AG04449 (cell line): ENCODE measurements at regions of chr17 and their contacts with region 1.

Region 1: GRCh38 chr17:49315551-49316257 is 46.3 kb downstream of the ZNF652 start:
- DNase-seq: peak; percentile 69
- H3K4me3 ChIP-seq: no peak overlapping the region
- CTCF ChIP-seq: peak; percentile 63

Region 2: GRCh38 chr17:49117587-49118230 is 198.0 kb before region 1 on chr17:
- CTCF ChIA-PET with region 1: no interaction called
- POLR2A ChIA-PET with region 1: no interaction called
- DNase-seq: no peak
- H3K4me3 ChIP-seq: no peak overlapping the region
- CTCF ChIP-seq: no peak

Region 3: GRCh38 chr17:49216482-49216881 is 99.2 kb before region 1 on chr17:
- CTCF ChIA-PET with region 1: no interaction called
- POLR2A ChIA-PET with region 1: no interaction called
- DNase-seq: no peak
- H3K4me3 ChIP-seq: no peak overlapping the region
- CTCF ChIP-seq: no peak

Region 4: GRCh38 chr17:49327835-49328784 is 12.4 kb after region 1 on chr17:
- CTCF ChIA-PET with region 1: interaction called, 26 read pairs
- POLR2A ChIA-PET with region 1: no interaction called
- DNase-seq: no peak
- H3K4me3 ChIP-seq: no peak overlapping the region
- CTCF ChIP-seq: no peak

Region 5: DNA sequence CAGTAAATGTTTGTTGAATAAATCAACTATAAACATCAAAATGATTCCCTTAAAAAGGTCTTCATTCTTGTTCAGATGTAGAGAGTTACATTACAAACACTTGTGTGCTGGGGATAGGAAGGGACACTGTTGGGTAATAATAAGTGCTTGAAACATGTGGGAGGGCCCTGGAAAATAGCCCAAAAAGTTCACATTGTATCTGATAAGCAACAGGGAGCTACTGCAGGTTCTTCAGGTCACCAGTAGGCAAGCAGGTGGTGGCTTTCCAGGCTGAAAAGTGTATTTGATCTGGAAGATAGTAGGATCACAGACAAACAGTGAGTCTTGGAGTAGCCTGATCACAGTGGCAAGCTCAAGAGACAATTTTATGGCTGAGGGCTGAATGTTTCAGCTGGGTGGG is 65.4 kb after region 1 on chr17:
- CTCF ChIA-PET with region 1: interaction called, 11 read pairs
- POLR2A ChIA-PET with region 1: no interaction called
- DNase-seq: no peak
- H3K4me3 ChIP-seq: no peak overlapping the region
- CTCF ChIP-seq: no peak

Region 6: GRCh38 chr17:49390548-49391324 is 75.0 kb after region 1 on chr17:
- CTCF ChIA-PET with region 1: interaction called, 297 read pairs
- POLR2A ChIA-PET with region 1: no interaction called
- DNase-seq: no peak
- H3K4me3 ChIP-seq: no peak overlapping the region
- CTCF ChIP-seq: no peak

Region 7: GRCh38 chr17:49401971-49402611 is 86.4 kb after region 1 on chr17:
- CTCF ChIA-PET with region 1: interaction called, 297 read pairs
- POLR2A ChIA-PET with region 1: no interaction called
- DNase-seq: no peak
- H3K4me3 ChIP-seq: no peak overlapping the region
- CTCF ChIP-seq: no peak

Region 8: DNA sequence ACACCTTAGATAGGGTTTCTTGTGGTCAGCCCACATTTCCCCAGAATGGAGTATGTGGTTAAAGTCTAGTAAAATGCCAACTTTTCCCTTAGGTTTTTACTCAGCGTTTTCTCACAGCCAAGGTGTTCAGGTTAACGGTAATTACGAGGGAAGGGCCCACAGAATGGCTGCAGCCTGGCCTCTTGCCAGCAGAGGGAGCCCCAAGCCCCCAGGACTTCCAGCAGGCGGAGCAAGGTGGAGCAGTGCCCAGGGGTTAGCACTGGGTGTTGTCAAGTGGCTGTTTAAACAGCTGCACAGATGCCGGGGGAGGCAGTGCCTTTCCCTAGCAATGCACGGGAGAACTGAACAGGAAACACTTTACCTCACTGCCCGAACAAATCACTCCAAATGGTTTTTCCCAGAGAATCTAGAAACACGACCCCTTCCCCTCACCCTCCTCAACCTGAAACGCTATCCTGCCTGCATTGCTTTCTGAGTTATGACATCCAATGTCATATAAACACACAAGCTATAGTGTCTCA is 92.3 kb after region 1 on chr17:
- CTCF ChIA-PET with region 1: interaction called, 297 read pairs
- POLR2A ChIA-PET with region 1: no interaction called
- DNase-seq: no peak
- H3K4me3 ChIP-seq: no peak overlapping the region
- CTCF ChIP-seq: peak; percentile 89